ENCODE measurements at regions of chr5 and their contacts with region 1.

Region 1: GRCh38 chr5:151659001-151659754 is 27.5 kb downstream of the SPARC start:
- DNase-seq: peak; percentile 85 to 92
- ATAC-seq: peak; percentile 84 to 91 (median 87)
- H3K4me3 ChIP-seq: no peak overlapping the region
- H3K27ac ChIP-seq: no peak overlapping the region
- H3K4me1 ChIP-seq: peaks cover 15% of the 10 kb centered on the region
- H3K27me3 ChIP-seq: no peaks in the 10 kb centered on the region
- CTCF ChIP-seq: peak; percentile 90

Region 2: GRCh38 chr5:151703227-151703626 is 44.0 kb after region 1 on chr5:
- intact Hi-C with region 1: loop called in 1 of 2 experiments (anchors 5 kb)
- DNase-seq: no peak
- ATAC-seq: peak; percentile 83 to 95 (median 88)
- H3K4me3 ChIP-seq: no peak overlapping the region
- H3K27ac ChIP-seq: peak overlapping the region; percentile 78
- H3K4me1 ChIP-seq: peaks cover 36% of the 10 kb centered on the region
- H3K27me3 ChIP-seq: no peaks in the 10 kb centered on the region
- CTCF ChIP-seq: no peak

Region 3: DNA sequence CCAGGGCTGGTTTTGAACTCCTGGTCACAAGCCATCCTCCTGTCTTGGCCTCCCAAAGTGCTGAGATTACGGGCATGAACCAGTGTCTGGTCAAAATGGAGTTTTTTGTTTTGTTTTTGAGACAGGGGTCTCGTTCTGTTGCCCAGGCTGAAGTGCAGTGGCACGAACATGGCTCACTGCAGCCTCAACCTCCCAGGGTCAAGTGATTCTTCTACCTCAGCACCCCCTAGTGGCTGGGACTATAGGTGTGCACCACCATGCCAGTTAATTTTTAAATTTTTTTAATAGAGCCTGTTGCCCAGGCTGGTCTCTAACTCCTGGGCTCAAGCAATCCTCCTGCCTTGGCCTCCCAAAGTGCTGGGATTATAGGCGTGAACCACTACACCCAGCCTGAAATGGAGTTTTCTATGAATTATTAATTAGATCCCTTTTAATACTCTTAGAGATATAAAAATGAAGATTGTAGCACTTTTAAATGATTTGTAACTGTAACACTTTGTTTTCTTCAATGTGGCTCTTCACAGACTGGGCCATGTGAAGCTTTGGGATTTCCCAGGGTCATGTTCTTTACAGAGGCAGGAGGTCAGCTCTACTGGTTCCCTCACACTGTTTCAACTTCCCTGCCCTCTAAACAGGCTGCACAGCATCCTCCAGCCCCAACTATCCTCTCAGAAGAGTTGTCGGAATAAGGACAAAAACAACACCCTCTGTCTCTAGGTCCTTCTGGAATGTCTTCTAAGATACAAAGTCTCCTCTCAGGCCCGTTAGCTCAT is 60.2 kb after region 1 on chr5:
- intact Hi-C with region 1: loop called (anchors 1 to 5 kb)
- DNase-seq: peak in 1 of 2 donors; percentile 61
- ATAC-seq: peak; percentile 81 to 90 (median 84)
- H3K4me3 ChIP-seq: no peak overlapping the region
- H3K27ac ChIP-seq: no peak overlapping the region
- H3K4me1 ChIP-seq: peaks cover 12% of the 10 kb centered on the region
- H3K27me3 ChIP-seq: no peaks in the 10 kb centered on the region
- CTCF ChIP-seq: peak; percentile 73

Region 4: GRCh38 chr5:151740336-151740942 is 81.3 kb after region 1 on chr5:
- intact Hi-C with region 1: loop called (anchors 1 to 2 kb)
- DNase-seq: peak; percentile 73 to 75
- ATAC-seq: peak; percentile 70 to 81 (median 78)
- H3K4me3 ChIP-seq: peak overlapping the region; percentile 5
- H3K27ac ChIP-seq: peak overlapping the region; percentile 62
- H3K4me1 ChIP-seq: peaks cover 18% of the 10 kb centered on the region
- H3K27me3 ChIP-seq: no peaks in the 10 kb centered on the region
- CTCF ChIP-seq: peak; percentile 88